Common myeloid progenitor, CD34-positive (primary cell): ENCODE measurements at regions of chr12 and their contacts with region 1.

Region 1: DNA sequence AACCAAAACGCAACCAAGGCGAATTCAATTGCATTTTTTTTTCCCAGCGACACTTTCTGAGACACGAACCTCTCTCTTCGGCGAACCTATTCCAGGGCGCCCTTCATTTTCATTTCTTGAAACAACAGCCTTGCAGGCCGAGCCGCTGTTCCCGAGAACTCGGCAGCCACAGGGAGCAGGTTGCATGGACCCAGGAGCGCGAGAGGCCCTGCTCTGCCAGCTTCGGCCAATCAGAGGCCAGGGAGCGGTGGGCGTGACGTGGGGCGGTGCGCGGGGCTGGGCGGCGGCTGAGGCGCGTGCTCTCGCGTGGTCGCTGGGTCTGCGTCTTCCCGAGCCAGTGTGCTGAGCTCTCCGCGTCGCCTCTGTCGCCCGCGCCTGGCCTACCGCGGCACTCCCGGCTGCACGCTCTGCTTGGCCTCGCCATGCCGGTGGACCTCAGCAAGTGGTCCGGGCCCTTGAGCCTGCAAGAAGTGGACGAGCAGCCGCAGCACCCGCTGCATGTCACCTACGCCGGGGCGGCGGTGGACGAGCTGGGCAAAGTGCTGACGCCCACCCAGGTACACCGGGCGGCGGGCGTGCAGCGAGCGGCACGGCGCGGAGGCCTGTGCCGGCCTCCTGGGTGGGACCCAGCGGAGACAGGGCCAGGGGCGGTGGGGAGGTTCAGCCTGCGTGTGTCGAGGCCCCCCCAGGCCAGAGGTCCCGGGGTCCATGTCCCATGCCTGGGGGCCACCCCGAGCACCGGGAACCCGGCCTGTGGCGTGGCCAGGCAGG is at the start of gene PEBP1:
- DNase-seq: peak; percentile 90 to 93 (median 91)
- H3K4me3 ChIP-seq: peak within 1 kb of the TSS; percentile 52 to 92 (median 80)
- H3K27ac ChIP-seq: peak within 1 kb of the TSS; percentile 50 to 84
- H3K4me1 ChIP-seq: peaks cover 3 to 17% (median 14%) of the 10 kb centered on the region in 4 experiments
- H3K27me3 ChIP-seq: no peaks in the 10 kb centered on the region

Region 2: GRCh38 chr12:118120579-118121363 is 15.2 kb before region 1 on chr12:
- CTCF ChIA-PET with region 1: interaction called, 11 read pairs
- POLR2A ChIA-PET with region 1: interaction called, 5 read pairs
- DNase-seq: peak; percentile 39 to 65 (median 56)
- H3K4me3 ChIP-seq: no peak overlapping the region
- H3K27ac ChIP-seq: no peak overlapping the region
- H3K4me1 ChIP-seq: no peaks in the 10 kb centered on the region
- H3K27me3 ChIP-seq: no peaks in the 10 kb centered on the region

Region 3: GRCh38 chr12:118212606-118213005 is 76.6 kb after region 1 on chr12:
- CTCF ChIA-PET with region 1: no interaction called
- POLR2A ChIA-PET with region 1: no interaction called
- DNase-seq: no peak
- H3K4me3 ChIP-seq: no peak overlapping the region
- H3K27ac ChIP-seq: no peak overlapping the region
- H3K4me1 ChIP-seq: no peaks in the 10 kb centered on the region
- H3K27me3 ChIP-seq: no peaks in the 10 kb centered on the region